ENCODE measurements at regions of chr19 and their contacts with region 1.

Region 1: GRCh38 chr19:58519355-58520256 is at the start of gene ZBTB45:
- DNase-seq: peak; percentile 86 to 96 (median 92)
- ATAC-seq: peak; percentile 87
- H3K4me3 ChIP-seq: peak within 1 kb of the TSS; percentile 79
- H3K27ac ChIP-seq: peak within 1 kb of the TSS; percentile 92
- H3K4me1 ChIP-seq: peaks cover 9 to 49% of the 10 kb centered on the region in 2 experiments
- H3K27me3 ChIP-seq: no peaks in the 10 kb centered on the region
- CTCF ChIP-seq: peak; percentile 77 to 86 (median 82)
- EP300 ChIP-seq: peak; percentile 15; the same call in 1 of the 2 replicates
- POLR2A ChIP-seq: peak; percentile 83
- RAD21 ChIP-seq: peak; percentile 83 to 85
- polyA plus RNA-seq, gene ZBTB45: 0.08 to 0.13 TPM

Region 2: GRCh38 chr19:58228585-58229254 is 290.9 kb before region 1 on chr19 and contains the start of gene ZNF544:
- CTCF ChIA-PET with region 1: no interaction called
- POLR2A ChIA-PET with region 1: no interaction called
- in situ Hi-C with region 1: no loop called
- intact Hi-C with region 1: no loop called
- DNase-seq: peak; percentile 78 to 84 (median 80)
- ATAC-seq: peak; percentile 96
- H3K4me3 ChIP-seq: peak within 1 kb of the TSS; percentile 56
- H3K27ac ChIP-seq: peak within 1 kb of the TSS; percentile 91
- H3K4me1 ChIP-seq: peaks cover 8 to 14% of the 10 kb centered on the region in 2 experiments; a peak in 4 of 5 replicates
- H3K27me3 ChIP-seq: no peaks in the 10 kb centered on the region; a peak in 1 of 5 replicates
- CTCF ChIP-seq: peak in 2 of 3 experiments; percentile 2 to 29; a peak in 1 of 6 replicates
- EP300 ChIP-seq: peak; percentile 58; the same call in 1 of the 2 replicates
- POLR2A ChIP-seq: peak; percentile 95
- RAD21 ChIP-seq: no peak
- polyA plus RNA-seq, gene ZNF544: 23.6 to 28.6 TPM

Region 3: DNA sequence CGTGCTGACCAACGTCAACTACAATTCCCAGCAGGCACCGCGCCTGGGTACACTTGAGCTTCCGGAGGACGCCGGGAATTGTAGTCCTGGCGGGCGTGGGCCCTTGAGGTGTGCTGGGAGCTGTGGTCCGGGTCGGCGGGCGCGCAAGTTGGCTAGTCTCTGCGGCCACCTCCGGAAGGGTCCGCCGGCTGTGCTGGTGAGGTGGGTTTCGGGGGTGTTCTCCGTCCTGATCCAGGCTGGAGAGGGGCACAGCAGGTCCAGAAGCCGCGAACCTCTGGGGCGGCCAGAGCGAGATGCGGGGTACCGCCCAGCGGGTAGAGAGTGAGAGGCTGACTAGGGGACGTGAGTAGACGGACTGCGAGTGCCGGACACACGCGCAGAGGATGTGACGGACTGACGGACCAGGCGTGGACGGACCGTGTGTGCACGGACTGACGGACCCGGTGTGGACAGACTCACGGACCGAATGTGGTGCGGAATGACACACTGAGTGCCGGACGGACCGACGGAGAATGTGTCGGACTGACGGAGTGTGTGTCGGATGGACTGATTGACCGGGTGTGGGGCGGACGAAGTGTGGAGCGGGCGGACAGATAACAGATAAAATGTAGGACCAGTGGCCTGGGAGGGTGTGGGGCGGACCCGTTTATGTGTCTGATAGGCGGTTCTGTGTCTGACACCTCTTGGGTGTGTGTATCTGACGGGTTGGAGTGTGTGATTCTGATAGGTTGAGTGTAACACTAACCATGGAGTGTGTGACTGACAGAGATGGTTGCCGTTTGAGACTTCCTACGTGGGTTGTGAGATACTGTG is 192.5 kb before region 1 on chr19 and contains the start of gene ZSCAN22:
- CTCF ChIA-PET with region 1: no interaction called
- POLR2A ChIA-PET with region 1: interaction called, 6 read pairs
- in situ Hi-C with region 1: no loop called
- intact Hi-C with region 1: loop called (anchors 1 kb)
- DNase-seq: peak; percentile 89 to 98 (median 92)
- ATAC-seq: peak; percentile 95
- H3K4me3 ChIP-seq: peak within 1 kb of the TSS; percentile 98
- H3K27ac ChIP-seq: peak within 1 kb of the TSS; percentile 94
- H3K4me1 ChIP-seq: peaks cover 20 to 25% of the 10 kb centered on the region in 2 experiments; a peak in 4 of 5 replicates
- H3K27me3 ChIP-seq: no peaks in the 10 kb centered on the region
- CTCF ChIP-seq: no peak
- EP300 ChIP-seq: peak; percentile 41
- POLR2A ChIP-seq: peak; percentile 96
- RAD21 ChIP-seq: peak; percentile 11 to 20; a peak in 1 of 4 replicates
- polyA plus RNA-seq, gene ZSCAN22: 0.98 to 1.9 TPM

Region 4: DNA sequence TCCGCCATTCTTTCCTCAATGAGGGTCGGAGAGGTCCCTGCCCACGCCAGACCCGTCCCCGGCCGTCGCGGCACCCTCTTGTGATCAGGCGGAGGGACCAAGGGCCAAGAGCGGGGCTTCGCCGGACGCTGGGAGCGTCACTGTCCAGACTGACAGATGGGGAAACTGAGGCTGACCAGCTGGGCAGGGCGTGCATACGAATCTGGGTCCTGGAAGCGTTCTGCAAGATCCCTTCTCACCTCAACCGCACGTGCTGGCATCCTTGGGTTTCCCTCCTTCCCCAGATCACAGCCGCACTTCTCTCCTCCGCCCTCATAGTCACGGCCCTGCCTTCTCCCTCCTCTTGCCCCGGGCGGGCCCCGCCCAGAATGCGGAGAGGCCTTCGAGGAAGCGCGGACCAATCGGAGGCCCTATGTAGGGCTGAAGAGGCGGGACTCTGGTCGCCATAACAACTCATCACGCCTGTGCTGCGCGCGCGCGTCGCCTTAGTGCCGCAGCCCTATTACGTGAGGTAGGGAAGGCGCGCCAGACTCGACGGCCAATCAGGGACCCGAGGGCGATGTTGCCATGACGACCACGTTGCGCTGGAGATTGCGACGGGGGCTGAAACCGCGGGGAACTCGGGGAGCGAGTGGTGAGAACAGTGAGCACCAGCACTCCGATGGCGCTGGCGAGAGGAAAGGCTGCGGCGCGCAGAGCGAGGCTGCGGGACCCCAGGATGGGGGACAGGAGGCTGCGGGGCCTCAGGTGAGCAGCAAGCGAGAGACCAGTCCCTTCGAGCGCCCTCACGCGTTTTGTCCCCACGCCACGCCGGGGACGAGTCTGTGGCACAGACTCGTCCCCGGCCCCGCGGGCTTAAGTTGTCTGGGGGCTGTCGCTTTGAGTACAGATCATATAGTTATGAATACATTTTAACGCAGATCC is 118.4 kb before region 1 on chr19:
- CTCF ChIA-PET with region 1: no interaction called
- POLR2A ChIA-PET with region 1: no interaction called
- in situ Hi-C with region 1: no loop called
- intact Hi-C with region 1: no loop called
- DNase-seq: peak; percentile 97 to 100 (median 98)
- ATAC-seq: peak; percentile 97
- H3K4me3 ChIP-seq: peak overlapping the region; percentile 72
- H3K27ac ChIP-seq: peak overlapping the region; percentile 70
- H3K4me1 ChIP-seq: peaks cover 26 to 56% of the 10 kb centered on the region in 2 experiments
- H3K27me3 ChIP-seq: no peaks in the 10 kb centered on the region
- CTCF ChIP-seq: peak in 2 of 3 experiments; percentile 6 to 7; a peak in 1 of 6 replicates
- EP300 ChIP-seq: no peak
- POLR2A ChIP-seq: peak; percentile 93
- RAD21 ChIP-seq: peak in 1 of 2 experiments; percentile 14; a peak in 2 of 4 replicates

Region 5: DNA sequence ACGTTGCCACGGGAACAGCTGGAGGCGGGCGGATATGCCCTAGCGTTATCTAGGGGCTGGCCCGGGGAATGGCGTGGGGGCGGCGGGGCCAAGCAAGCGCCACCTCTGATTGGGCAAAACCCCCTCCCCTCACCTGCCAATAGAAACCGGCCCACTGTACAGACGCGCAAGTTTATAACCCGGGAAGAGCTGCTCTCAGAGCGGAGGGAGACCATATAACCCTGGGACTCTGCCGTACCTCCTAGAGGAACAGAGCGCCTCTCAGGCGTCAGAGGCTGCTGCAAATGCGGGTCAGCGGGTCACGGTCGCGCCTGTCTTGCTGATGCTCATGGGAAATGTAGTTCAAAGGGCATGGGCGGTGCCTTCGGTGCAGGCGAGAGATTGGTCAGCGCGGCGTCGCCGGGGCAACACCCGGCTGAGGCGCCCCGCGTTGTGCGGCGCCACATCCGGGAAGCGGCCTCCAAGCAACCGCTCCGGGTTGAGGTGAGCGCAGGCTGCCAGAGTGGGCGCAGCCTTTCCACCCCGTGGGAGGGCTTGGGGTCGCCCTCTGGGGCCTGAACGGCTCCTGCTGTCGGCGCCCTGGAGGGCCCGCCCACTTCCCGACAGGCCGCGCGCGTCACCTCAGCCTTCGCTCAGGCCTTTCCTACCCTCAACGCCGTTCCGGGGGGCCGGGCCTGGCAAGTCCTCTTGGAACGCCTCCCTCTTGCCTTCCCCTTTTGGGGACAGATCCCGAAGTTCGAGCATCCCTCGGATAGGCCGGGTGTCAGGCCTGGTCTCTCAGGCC is 43.7 kb before region 1 on chr19 and contains the start of gene ZNF446:
- CTCF ChIA-PET with region 1: no interaction called
- POLR2A ChIA-PET with region 1: interaction called, 7 read pairs
- in situ Hi-C with region 1: no loop called
- intact Hi-C with region 1: loop called (anchors 1 kb)
- DNase-seq: peak; percentile 91 to 99 (median 94)
- ATAC-seq: peak; percentile 91
- H3K4me3 ChIP-seq: peak within 1 kb of the TSS; percentile 59
- H3K27ac ChIP-seq: peak within 1 kb of the TSS; percentile 92
- H3K4me1 ChIP-seq: peaks cover 26 to 52% of the 10 kb centered on the region in 2 experiments
- H3K27me3 ChIP-seq: no peaks in the 10 kb centered on the region
- CTCF ChIP-seq: peak in 2 of 3 experiments; percentile 21 to 33; a peak in 1 of 6 replicates
- EP300 ChIP-seq: peak; percentile 7; the same call in 1 of the 2 replicates
- POLR2A ChIP-seq: peak; percentile 79
- RAD21 ChIP-seq: no peak; a peak in 1 of 4 replicates
- polyA plus RNA-seq, gene ZNF446: 0.07 to 0.17 TPM

Region 6: DNA sequence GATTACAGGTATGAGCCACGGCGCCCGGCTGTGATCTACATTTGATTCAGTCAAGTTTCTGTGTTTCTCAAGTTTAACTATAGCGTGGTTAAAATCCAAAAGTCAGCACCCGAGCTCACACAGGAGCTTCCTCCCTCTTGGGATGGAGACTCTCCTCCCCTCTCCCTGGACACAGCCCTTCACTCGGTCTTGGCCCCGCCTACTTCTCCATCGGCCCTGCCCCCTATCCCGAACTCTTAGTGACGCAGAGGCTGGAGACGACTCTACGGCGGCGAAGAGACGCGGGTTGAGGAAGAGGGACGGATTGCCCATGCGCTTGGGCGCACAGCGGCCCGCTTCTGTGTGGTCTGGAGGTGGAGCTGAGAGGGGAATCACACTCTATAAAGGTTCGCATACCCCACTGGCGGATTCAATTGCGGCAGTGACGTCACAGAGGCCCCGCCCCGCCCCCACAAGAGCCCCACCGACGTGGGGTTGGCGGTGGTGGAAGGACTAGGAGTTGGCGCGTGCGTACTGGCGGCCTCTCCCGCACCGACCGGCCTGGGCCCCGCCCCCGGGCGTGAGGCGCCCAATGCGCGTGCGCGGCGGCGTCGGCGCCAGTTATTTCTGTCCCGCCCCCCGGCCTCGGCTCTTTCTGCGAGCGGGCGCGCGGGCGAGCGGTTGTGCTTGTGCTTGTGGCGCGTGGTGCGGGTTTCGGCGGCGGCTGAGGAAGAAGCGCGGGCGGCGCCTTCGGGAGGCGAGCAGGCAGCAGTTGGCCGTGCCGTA is 24.4 kb after region 1 on chr19 and contains the start of gene TRIM28:
- CTCF ChIA-PET with region 1: interaction called, 4 read pairs
- POLR2A ChIA-PET with region 1: interaction called, 12 read pairs
- in situ Hi-C with region 1: no loop called
- intact Hi-C with region 1: no loop called
- DNase-seq: peak; percentile 97 to 100 (median 100)
- ATAC-seq: peak; percentile 96
- H3K4me3 ChIP-seq: peak within 1 kb of the TSS; percentile 100
- H3K27ac ChIP-seq: peak within 1 kb of the TSS; percentile 88
- H3K4me1 ChIP-seq: peaks cover 13 to 28% of the 10 kb centered on the region in 2 experiments; a peak in 4 of 5 replicates
- H3K27me3 ChIP-seq: no peaks in the 10 kb centered on the region
- CTCF ChIP-seq: no peak
- EP300 ChIP-seq: no peak
- POLR2A ChIP-seq: peak; percentile 92
- RAD21 ChIP-seq: no peak
- polyA plus RNA-seq, gene TRIM28: 12.1 to 29.3 TPM

Region 7: DNA sequence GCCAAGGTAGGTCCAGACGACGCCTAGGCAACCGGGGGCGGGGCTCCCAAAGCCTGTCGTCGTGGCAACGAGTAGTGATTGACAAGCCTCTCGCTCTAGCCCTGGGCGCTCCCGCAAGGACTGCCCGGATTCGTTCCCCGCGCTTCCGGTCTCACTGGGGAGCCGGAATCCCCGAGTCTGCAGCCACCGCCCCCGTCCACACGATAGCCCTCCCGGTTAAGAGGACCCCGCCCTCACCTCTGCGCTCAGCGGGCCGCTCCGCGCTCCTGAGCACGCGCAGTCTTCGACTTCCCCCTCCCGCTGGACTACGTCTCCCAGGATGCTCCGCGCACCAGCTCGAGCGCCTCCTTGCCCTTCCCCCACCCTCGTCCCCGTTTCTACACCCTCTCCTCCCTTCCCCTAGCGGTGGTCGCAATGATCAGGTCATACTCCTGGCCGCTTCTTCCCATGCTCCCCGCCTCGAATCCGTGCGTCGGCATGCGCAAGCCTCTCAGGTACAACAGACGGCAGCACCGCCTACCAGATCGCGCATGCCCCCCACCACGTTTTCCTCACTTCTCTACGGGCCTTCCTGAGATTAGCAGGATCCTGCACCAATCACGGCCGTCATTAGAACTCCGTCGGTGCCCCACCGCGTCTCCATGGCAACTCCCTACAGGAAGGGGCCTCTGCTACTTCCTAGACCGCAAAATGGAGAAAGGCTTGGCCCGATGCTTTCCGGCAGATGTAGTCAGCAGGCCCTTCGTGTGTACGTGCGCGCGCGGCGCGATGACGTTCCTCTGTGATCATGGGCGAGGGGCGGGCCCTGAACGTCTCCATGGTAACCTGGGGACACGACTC is 53.4 kb after region 1 on chr19 and contains the start of gene MZF1:
- CTCF ChIA-PET with region 1: no interaction called
- POLR2A ChIA-PET with region 1: interaction called, 4 read pairs
- in situ Hi-C with region 1: no loop called
- intact Hi-C with region 1: loop called (anchors 2 kb)
- DNase-seq: peak; percentile 92 to 100 (median 94)
- ATAC-seq: peak; percentile 77
- H3K4me3 ChIP-seq: peak within 1 kb of the TSS; percentile 71
- H3K27ac ChIP-seq: peak within 1 kb of the TSS; percentile 99
- H3K4me1 ChIP-seq: peaks cover 25 to 35% of the 10 kb centered on the region in 2 experiments; a peak in 4 of 5 replicates
- H3K27me3 ChIP-seq: no peaks in the 10 kb centered on the region
- CTCF ChIP-seq: peak in 2 of 3 experiments; percentile 2 to 30; a peak in 1 of 6 replicates
- EP300 ChIP-seq: 0 out of 2 replicates have a peak, but pooled peaks have one; percentile 4
- POLR2A ChIP-seq: peak; percentile 87
- RAD21 ChIP-seq: no peak
- polyA plus RNA-seq, gene MZF1: 0.31 to 1.6 TPM

Measured in K562 (cell line).